ENCODE measurements at regions of chr19 and their contacts with region 1.

Region 1: DNA sequence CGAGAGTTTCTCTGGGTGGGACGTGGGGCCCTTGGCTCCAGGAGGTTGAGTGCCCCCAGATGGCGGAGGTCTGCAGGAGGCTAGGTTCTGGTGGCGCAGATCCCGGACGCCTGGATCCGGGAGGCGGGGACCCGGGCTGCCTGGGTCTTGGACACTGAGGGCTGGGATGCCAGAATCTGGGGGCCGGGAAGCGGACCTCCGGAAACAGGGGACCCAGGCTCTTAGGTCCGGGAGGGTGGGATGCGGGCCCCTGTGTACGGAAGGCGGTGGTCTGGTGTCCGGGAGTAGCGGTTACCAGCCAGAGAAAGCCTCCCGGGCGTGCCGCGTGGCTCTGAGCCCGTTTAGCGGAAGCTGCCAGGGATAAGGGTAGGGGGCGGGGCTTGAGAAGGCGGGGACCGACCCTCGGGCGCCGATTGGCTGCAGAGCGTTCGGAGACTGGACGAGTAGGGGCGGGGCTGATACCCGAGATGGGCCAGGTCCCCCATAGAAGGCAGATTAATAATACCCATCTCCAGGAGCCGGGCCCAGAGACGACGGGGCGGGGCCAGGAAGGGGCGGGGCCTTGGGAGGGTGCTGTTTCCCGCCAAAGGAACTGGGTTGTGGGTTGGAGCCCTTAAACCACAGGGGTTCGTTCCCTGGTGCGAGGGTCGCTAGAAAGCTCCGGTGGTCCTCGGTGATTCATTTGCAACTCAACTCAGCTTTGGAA is at the start of gene SLC1A5:
- DNase-seq: peak; percentile 77 to 98 (median 84)
- ATAC-seq: peak; percentile 93
- H3K4me3 ChIP-seq: peak within 1 kb of the TSS; percentile 77
- H3K4me3 Mint-ChIP-seq: peak within 1 kb of the TSS; percentile 85 to 91 (median 89)
- H3K27ac ChIP-seq: peak within 1 kb of the TSS; percentile 62
- H3K27ac Mint-ChIP-seq: peak within 1 kb of the TSS; percentile 25 to 92 (median 86)
- H3K4me1 ChIP-seq: peaks cover 31 to 44% of the 10 kb centered on the region in 2 donors
- H3K4me1 Mint-ChIP-seq: peaks cover 19 to 72% (median 60%) of the 10 kb centered on the region in 7 donors
- H3K27me3 ChIP-seq: no peaks in the 10 kb centered on the region
- H3K27me3 Mint-ChIP-seq: peaks cover 0 to 3% (median 0%) of the 10 kb centered on the region in 5 donors
- total RNA-seq, gene SLC1A5: 3.5 to 120 (median 5.3) TPM

Region 2: DNA sequence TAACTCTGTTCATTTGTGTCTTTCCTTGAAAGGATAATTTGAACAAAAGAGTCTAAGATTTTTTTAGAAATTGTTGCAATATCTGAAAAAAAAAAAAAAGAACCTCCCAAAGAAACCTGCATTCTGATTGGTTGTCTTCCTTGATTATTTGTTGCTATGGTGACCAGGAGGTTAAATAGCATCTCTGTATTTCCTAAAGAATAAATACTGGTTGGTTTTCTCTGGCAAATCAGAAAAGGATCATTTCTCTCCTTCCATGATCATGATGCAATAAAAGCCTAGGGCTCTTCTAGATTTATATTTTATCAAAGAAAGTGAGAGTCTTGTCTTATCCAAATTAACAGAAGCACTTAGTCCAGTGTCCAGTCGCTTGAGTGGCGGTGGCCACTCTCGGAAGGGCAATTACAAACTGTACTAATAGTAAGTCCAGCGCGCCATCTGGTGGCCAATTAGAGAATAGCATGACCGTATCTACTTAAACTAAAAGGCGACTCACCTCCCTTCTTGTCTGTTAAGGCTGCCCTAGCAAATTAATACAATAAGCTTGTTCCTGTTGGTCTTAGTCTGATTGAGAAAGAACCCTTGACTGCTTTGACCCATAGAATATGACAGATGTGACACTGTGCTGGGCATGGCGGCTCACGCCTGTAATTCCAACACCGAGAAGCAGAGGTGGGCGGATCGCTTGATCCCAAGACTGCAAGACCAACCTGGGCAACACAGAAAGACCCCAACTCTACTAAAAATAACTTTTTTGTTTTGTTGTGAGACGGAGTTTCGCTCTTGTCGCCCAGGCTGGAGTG is 245.8 kb before region 1 on chr19:
- CTCF ChIA-PET with region 1: no interaction called
- POLR2A ChIA-PET with region 1: no interaction called
- intact Hi-C with region 1: no loop called
- DNase-seq: peak; percentile 46 to 73 (median 64)
- ATAC-seq: peak; percentile 87
- H3K4me3 ChIP-seq: no peak overlapping the region
- H3K4me3 Mint-ChIP-seq: no peak overlapping the region
- H3K27ac ChIP-seq: no peak overlapping the region
- H3K27ac Mint-ChIP-seq: peak overlapping the region in 2 of 9 donors; percentile 14 to 16
- H3K4me1 ChIP-seq: no peaks in the 10 kb centered on the region
- H3K4me1 Mint-ChIP-seq: peaks cover 2 to 13% (median 5%) of the 10 kb centered on the region in 7 donors
- H3K27me3 ChIP-seq: no peaks in the 10 kb centered on the region
- H3K27me3 Mint-ChIP-seq: peaks cover 0 to 11% (median 0%) of the 10 kb centered on the region in 5 donors

Region 3: GRCh38 chr19:46555628-46556280 is 232.7 kb before region 1 on chr19:
- CTCF ChIA-PET with region 1: no interaction called
- POLR2A ChIA-PET with region 1: no interaction called
- intact Hi-C with region 1: no loop called
- DNase-seq: no peak
- ATAC-seq: peak; percentile 34
- H3K4me3 ChIP-seq: no peak overlapping the region
- H3K4me3 Mint-ChIP-seq: no peak overlapping the region
- H3K27ac ChIP-seq: no peak overlapping the region
- H3K27ac Mint-ChIP-seq: no peak overlapping the region
- H3K4me1 ChIP-seq: no peaks in the 10 kb centered on the region
- H3K4me1 Mint-ChIP-seq: no peaks in the 10 kb centered on the region
- H3K27me3 ChIP-seq: peaks cover 0 to 2% of the 10 kb centered on the region in 2 donors
- H3K27me3 Mint-ChIP-seq: peaks cover 5 to 46% (median 7%) of the 10 kb centered on the region in 5 donors

Region 4: DNA sequence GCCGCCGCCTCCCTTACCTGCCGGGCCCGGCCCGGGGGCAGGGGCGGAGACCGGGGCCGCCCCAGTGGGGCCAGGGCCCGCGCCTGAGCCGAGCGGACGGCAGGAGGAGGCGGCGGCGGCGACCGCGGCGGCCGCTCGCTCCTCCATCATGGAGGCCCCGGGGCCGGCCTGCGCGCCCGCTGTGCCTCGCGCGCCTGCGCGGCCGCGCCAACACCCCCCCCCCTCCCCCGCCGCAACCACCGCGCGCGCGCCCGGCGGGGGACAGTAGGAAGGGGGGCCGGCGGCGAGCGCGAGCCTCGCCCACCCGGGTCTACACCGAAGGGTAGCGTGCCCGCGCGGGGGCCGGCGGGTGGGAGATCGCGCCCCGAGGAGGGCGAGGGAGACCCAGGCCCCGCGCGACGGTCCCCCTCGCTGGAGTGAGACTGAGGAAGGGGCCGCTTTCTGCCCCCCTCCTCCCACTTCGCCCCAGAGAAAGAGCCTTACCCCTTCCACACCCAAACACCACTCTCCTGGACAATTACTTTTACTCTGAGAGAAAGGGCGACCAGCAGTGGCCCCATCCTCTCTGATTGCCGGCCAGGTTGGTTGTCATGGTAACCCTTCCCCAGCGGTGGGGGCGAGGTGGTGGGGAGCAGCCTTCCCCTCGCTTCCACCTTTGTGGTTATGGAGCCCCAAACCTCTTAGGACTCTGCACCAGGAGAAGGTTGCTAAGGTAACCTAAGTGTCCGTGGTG is 42.0 kb before region 1 on chr19 and contains the start of gene STRN4:
- CTCF ChIA-PET with region 1: interaction called, 4 read pairs
- POLR2A ChIA-PET with region 1: interaction called, 3 read pairs
- intact Hi-C with region 1: loop called (anchors 1 to 5 kb)
- DNase-seq: peak in 8 of 9 donors; percentile 29 to 65 (median 50)
- ATAC-seq: peak; percentile 87
- H3K4me3 ChIP-seq: peak within 1 kb of the TSS; percentile 73
- H3K4me3 Mint-ChIP-seq: peak within 1 kb of the TSS; percentile 84 to 97 (median 90)
- H3K27ac ChIP-seq: peak within 1 kb of the TSS; percentile 91
- H3K27ac Mint-ChIP-seq: peak within 1 kb of the TSS; percentile 74 to 94 (median 87)
- H3K4me1 ChIP-seq: peaks cover 21 to 26% of the 10 kb centered on the region in 2 donors
- H3K4me1 Mint-ChIP-seq: peaks cover 43 to 64% (median 58%) of the 10 kb centered on the region in 7 donors
- H3K27me3 ChIP-seq: no peaks in the 10 kb centered on the region
- H3K27me3 Mint-ChIP-seq: no peaks in the 10 kb centered on the region
- total RNA-seq, gene STRN4: 81.3 to 120 (median 90.4) TPM

Region 5: GRCh38 chr19:46850228-46851203 is 62.1 kb after region 1 on chr19 and contains the start of gene AP2S1:
- CTCF ChIA-PET with region 1: no interaction called
- POLR2A ChIA-PET with region 1: no interaction called
- intact Hi-C with region 1: loop called (anchors 2 kb)
- DNase-seq: peak; percentile 73 to 98 (median 93)
- ATAC-seq: peak; percentile 97
- H3K4me3 ChIP-seq: peak within 1 kb of the TSS; percentile 89
- H3K4me3 Mint-ChIP-seq: peak within 1 kb of the TSS; percentile 87 to 99 (median 93)
- H3K27ac ChIP-seq: peak within 1 kb of the TSS; percentile 79
- H3K27ac Mint-ChIP-seq: peak within 1 kb of the TSS; percentile 68 to 96 (median 83)
- H3K4me1 ChIP-seq: peaks cover 9 to 12% of the 10 kb centered on the region in 2 donors
- H3K4me1 Mint-ChIP-seq: peaks cover 20 to 34% (median 29%) of the 10 kb centered on the region in 7 donors
- H3K27me3 ChIP-seq: no peaks in the 10 kb centered on the region
- H3K27me3 Mint-ChIP-seq: peaks cover 0 to 3% (median 0%) of the 10 kb centered on the region in 5 donors
- total RNA-seq, gene AP2S1: 34.4 to 116 (median 46.5) TPM